ENCODE measurements at regions of chr20 and their contacts with region 1.

Region 1: GRCh38 chr20:41734506-41735025 is 116.4 kb upstream of the CHD6 start:
- DNase-seq: no peak

Region 2: GRCh38 chr20:41910558-41910957 is 176.0 kb after region 1 on chr20:
- intact Hi-C with region 1: no loop called
- DNase-seq: no peak

Region 3: GRCh38 chr20:41998538-41999341 is 264.2 kb after region 1 on chr20:
- intact Hi-C with region 1: no loop called
- DNase-seq: no peak

Region 4: GRCh38 chr20:43187476-43188233 is 1453.1 kb after region 1 on chr20:
- intact Hi-C with region 1: loop called (anchors 2 kb)
- DNase-seq: no peak

Measured in cardiac septum (tissue), 1 donor.